ENCODE measurements at regions of chr12 and their contacts with region 1.

Region 1: DNA sequence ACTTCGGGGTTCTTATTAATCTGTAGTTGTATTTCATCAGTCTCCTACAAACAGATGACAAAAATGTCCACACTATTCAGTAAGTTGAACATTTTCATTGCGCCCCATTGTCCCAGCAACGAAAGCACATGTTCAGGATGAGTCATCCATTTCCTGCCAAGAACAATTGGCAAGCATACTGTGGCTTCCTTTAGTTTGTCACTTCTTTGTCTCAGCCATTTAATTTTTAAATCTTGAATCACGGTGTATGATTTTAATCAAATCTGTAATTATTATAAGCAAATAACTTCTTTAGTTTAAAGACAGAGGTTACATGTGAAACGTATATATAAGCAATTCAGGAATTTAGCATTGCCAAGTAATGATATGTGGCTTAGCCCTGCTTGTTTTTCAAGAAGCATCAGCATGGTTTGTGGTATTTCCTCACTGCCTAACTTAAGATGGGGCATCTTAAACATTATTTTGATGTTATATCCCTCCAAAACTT is 211.3 kb upstream of the KRR1 start:
- DNase-seq: peak; percentile 69
- H3K4me3 ChIP-seq: no peak overlapping the region
- H3K27ac ChIP-seq: peak overlapping the region in 1 of 2 donors; percentile 23
- H3K4me1 ChIP-seq: peaks cover 7% of the 10 kb centered on the region
- H3K27me3 ChIP-seq: no peaks in the 10 kb centered on the region
- CTCF ChIP-seq: no peak
- POLR2A ChIP-seq: no peak

Region 2: DNA sequence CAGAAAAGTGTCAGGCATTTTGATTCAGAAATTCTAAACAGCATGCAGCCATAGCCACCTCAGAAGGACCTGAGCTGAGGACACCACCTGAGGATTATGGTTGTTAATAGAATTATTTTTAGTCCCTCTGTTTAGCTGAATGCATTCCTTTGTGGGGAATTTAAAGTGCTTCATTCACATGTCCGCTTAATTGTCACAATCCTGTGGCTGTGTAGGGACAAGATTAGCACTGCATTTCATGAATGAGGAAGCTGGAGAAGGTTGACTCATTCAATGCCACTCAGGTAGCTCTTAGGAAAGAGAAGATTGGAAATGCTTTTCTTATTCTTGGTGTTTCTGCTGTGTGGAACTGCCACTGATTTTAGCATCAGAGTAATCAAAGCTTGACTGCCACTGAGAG is 169.4 kb before region 1 on chr12:
- intact Hi-C with region 1: loop called (anchors 10 kb)
- DNase-seq: no peak
- H3K4me3 ChIP-seq: no peak overlapping the region
- H3K27ac ChIP-seq: no peak overlapping the region
- H3K4me1 ChIP-seq: no peaks in the 10 kb centered on the region
- H3K27me3 ChIP-seq: no peaks in the 10 kb centered on the region
- CTCF ChIP-seq: no peak
- POLR2A ChIP-seq: no peak

Region 3: GRCh38 chr12:75672200-75672599 is 50.6 kb before region 1 on chr12:
- intact Hi-C with region 1: no loop called
- DNase-seq: no peak
- H3K4me3 ChIP-seq: no peak overlapping the region
- H3K27ac ChIP-seq: no peak overlapping the region
- H3K4me1 ChIP-seq: no peaks in the 10 kb centered on the region
- H3K27me3 ChIP-seq: no peaks in the 10 kb centered on the region
- CTCF ChIP-seq: no peak
- POLR2A ChIP-seq: no peak

Region 4: DNA sequence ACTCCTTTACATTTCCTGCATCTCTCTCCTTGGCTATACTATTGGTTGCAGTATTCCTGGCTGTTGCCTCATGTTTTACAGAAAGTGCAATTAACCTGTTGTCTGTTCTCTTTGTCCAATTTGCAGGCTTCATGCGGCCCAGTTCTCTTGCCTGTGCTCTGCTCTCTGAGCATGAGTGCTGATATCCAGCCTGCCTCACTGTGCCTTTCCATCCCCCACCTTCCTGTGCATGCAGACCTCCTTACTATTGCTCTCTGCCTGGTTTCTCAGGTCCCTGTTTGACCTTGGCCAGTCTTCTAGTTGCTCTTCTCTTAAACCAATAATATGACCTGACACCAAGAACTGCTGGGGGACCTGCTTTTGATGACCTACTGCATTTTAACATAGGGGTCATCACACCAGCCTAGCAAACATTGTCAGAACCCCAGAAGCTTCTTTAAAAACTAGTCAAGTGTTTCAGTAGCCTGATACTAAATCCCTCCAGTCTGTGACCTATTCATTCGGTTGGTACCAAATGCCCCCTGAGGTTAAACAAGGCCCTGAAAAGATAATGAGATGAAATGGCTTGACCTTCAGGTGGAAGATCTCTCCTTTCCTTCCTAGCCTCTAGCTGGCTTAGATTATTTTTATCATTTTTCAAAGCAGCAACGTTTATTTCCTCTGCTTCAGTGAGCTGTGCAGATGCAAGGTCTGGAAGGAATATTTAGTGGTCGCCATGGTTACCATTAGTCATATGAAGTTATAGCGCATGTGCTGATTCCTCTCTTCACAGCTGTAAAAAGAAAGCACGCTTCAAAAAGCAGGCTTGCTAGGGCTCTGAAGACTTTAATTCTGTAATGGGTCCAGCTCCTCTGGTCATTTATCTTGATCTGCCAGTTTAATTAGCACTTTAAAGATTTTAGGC is 92.3 kb after region 1 on chr12:
- intact Hi-C with region 1: loop called (anchors 10 kb)
- DNase-seq: no peak
- H3K4me3 ChIP-seq: no peak overlapping the region
- H3K27ac ChIP-seq: no peak overlapping the region
- H3K4me1 ChIP-seq: no peaks in the 10 kb centered on the region
- H3K27me3 ChIP-seq: no peaks in the 10 kb centered on the region
- CTCF ChIP-seq: no peak
- POLR2A ChIP-seq: no peak

Measured in prostate gland (tissue), 2 donors.